HCT116 (cell line): ENCODE measurements at regions of chr1 and their contacts with region 1.

Region 1: DNA sequence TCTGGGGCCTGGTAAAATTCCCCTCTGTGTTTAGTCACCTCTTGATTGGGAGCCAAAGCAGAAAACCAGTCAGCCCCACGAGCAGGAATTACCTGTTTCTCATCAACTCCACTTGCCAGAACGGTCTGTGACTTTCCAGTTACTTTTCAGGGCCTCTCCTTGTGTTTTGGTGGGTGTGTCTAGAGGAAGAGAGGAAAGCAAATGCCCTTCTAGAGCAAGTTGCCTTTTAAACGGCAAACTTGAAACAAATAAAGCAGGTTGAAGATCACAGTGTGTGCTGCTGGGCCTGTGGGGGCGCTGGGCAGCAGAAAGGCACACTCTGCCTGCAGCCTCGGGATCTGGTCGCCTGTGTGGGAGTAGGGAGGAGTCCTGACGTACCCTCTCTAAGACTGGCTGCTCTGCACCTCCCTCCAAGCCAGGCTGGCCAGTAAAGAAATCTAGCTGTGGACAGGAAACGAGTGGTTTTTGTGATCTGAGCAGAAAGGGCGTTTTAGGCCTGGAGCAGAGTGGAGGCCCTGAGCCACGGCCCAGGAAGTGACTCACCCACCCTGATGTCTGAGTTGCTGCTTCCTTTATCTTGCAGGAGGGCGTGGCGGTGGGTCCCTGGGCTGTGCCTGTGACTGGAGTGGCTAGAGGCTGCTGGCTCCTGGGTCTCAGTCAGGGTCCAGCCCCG is 11.1 kb upstream of the S100A11 start:
- DNase-seq: peak; percentile 99
- ATAC-seq: peak; percentile 88
- H3K4me3 ChIP-seq: peak overlapping the region; percentile 45 to 48
- H3K27ac ChIP-seq: peak overlapping the region; percentile 98
- H3K4me1 ChIP-seq: peaks cover 29 to 61% of the 10 kb centered on the region in 2 experiments
- H3K27me3 ChIP-seq: no peaks in the 10 kb centered on the region
- CTCF ChIP-seq: peak; percentile 4 to 67 (median 55); a peak in 4 of 6 replicates
- POLR2A ChIP-seq: peak; percentile 86
- RAD21 ChIP-seq: peak; percentile 17; the same call in 1 of the 2 replicates

Region 2: GRCh38 chr1:152034646-152035405 is 13.0 kb before region 1 on chr1:
- CTCF ChIA-PET with region 1: interaction called, 21 read pairs
- POLR2A ChIA-PET with region 1: interaction called, 35 read pairs
- RAD21 ChIA-PET with region 1: interaction called, 3 to 4 read pairs
- intact Hi-C with region 1: loop called (anchors 1 kb)
- DNase-seq: peak; percentile 79
- ATAC-seq: peak; percentile 62
- H3K4me3 ChIP-seq: peak overlapping the region; percentile 64 to 70
- H3K27ac ChIP-seq: peak overlapping the region; percentile 79
- H3K4me1 ChIP-seq: peaks cover 19 to 28% of the 10 kb centered on the region in 2 experiments
- H3K27me3 ChIP-seq: no peaks in the 10 kb centered on the region
- CTCF ChIP-seq: peak; percentile 52 to 79 (median 78); a peak in 5 of 6 replicates
- POLR2A ChIP-seq: no peak
- RAD21 ChIP-seq: peak; percentile 53

Region 3: DNA sequence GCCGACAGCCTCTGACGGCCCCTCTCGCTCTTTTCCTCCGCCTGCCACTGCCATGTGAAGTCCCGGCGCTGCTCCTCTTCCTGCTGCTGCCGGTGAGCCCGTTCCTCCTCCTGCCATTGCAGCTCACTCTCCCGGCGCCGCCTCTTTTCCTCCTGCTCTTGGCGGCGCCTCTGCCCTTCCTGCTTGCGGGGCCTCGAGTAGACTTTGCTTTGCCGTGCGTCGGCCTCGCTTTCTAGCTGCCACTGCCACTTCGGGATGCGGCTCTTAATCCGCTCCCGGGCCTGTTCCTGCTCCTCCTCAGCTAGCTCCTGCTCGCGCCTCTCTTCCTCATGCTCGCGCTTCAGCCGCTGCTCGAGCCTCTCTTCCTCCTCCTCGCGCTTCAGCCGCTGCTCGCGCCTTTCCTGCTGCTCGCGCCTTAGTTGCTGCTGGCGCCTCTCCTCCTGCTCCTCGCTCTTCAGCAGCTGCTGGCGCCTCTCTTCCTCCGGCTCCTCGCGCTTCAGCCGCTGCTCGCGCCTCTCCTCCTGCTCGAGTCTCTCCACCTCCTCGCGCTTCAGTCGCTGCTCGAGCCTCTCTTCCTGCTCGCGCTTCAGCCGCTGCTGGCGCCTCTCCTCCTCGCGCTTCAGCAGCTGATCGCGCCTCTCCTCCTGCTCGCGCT is 63.1 kb after region 1 on chr1:
- CTCF ChIA-PET with region 1: interaction called, 7 read pairs
- POLR2A ChIA-PET with region 1: interaction called, 4 read pairs
- RAD21 ChIA-PET with region 1: no interaction called
- intact Hi-C with region 1: loop called (anchors 2 kb)
- DNase-seq: no peak
- ATAC-seq: peak; percentile 54
- H3K4me3 ChIP-seq: peak overlapping the region; percentile 44 to 58
- H3K27ac ChIP-seq: no peak overlapping the region
- H3K4me1 ChIP-seq: peaks cover 20 to 50% of the 10 kb centered on the region in 2 experiments
- H3K27me3 ChIP-seq: peaks cover 85% of the 10 kb centered on the region
- CTCF ChIP-seq: no peak
- POLR2A ChIP-seq: no peak
- RAD21 ChIP-seq: no peak

Region 4: DNA sequence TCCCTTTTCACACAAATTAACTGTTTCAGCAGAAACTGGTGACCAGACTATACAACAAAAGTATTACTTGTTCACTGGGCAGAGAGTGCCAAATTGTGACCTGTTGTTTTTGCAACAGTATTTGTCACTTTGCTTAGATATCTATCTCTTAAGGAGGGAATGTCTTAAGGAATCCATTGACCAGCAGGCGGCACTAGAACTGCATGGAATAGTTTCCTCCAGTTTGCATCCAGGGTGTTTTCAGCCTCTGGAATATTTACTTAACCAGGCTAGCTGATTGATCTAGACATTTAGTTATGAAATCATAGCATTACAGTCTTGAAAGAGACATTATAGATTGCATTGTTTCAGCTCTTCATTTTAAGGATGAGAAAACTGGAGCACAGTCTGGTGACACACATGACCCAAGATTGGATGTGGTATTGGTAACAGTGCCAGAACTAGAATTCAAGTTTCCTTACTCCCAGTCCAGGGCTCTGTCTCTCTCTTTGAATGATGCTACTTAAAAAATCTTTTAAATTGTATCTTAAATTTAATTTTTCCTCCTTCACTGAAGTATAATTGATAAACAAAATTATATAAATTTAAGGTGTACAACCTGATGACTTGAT is 94.2 kb after region 1 on chr1:
- CTCF ChIA-PET with region 1: interaction called, 6 read pairs
- POLR2A ChIA-PET with region 1: no interaction called
- RAD21 ChIA-PET with region 1: interaction called in 1 of 2 experiments, 3 read pairs
- intact Hi-C with region 1: loop called (anchors 2 kb)
- DNase-seq: peak; percentile 63
- ATAC-seq: peak; percentile 91
- H3K4me3 ChIP-seq: no peak overlapping the region
- H3K27ac ChIP-seq: no peak overlapping the region
- H3K4me1 ChIP-seq: no peaks in the 10 kb centered on the region
- H3K27me3 ChIP-seq: peaks cover 26% of the 10 kb centered on the region
- CTCF ChIP-seq: peak; percentile 80 to 94 (median 93)
- POLR2A ChIP-seq: no peak
- RAD21 ChIP-seq: peak; percentile 97